Motor neuron (in vitro differentiated cells): ENCODE measurements at regions of chr6 and their contacts with region 1.

Region 1: GRCh38 chr6:49849213-49849907 is 17.0 kb downstream of the CRISP1 start:
- ATAC-seq: peak; percentile 65 to 84 (median 76)
- H3K4me3 ChIP-seq: no peak overlapping the region
- H3K27ac ChIP-seq: no peak overlapping the region
- H3K4me1 ChIP-seq: no peaks in the 10 kb centered on the region

Region 2: DNA sequence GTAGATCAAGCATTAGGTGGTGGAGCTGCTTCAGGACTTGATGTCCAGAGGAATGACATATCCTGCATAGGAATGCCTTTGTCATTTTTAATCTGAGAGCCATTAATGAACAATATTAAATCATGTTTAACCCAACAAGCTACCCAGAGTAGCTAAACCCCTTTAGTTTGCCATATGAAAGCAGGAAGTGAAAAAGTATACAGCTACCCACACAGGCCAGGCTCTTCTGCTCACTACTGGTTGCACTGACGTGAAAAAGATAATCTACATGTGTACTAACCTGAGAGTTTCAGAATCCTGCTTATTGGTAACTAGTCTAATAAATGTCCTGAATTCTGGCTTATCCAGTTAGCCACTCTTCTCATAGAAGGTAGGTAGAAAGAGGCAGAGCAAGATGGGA is 329.7 kb before region 1 on chr6:
- in situ Hi-C with region 1: loop called in 1 of 9 experiments (anchors 25 kb)
- ATAC-seq: no peak
- H3K4me3 ChIP-seq: no peak overlapping the region
- H3K27ac ChIP-seq: no peak overlapping the region
- H3K4me1 ChIP-seq: no peaks in the 10 kb centered on the region

Region 3: DNA sequence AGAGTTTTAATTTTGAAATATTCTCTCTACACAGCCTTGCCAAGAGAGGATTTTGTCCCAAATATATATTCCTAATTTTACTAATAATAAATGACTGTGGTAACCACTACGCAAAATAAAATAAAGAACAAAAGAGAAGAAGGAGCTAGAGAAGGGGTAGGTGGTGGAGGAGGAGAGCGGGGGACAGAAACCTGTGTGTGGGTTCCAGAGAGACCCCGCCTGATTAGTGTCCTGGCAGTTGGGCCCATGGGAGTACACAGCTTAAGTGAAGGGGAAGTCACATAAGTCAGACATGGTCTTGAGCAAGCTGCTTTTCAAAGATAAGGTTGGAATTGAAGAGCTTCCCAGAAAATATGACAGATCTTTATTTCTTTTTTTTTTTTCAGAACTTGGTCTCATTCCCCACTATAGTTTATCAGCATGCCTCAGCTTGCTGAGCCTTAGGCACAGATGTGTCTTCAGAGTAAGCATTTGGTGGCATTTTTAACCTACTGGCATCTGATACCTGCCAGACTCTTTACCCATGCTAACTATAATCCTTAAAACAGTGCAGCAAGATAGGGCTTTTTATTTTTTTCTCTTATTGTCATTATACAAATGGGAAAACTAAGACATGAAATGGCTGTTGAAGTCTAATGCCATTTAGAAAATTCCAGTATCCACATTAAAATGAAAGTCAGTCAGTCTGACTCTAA is 203.1 kb before region 1 on chr6:
- in situ Hi-C with region 1: loop called in 1 of 9 experiments (anchors 25 kb)
- ATAC-seq: no peak
- H3K4me3 ChIP-seq: no peak overlapping the region
- H3K27ac ChIP-seq: no peak overlapping the region
- H3K4me1 ChIP-seq: no peaks in the 10 kb centered on the region